ENCODE measurements at regions of chr11 and their contacts with region 1.

Region 1: DNA sequence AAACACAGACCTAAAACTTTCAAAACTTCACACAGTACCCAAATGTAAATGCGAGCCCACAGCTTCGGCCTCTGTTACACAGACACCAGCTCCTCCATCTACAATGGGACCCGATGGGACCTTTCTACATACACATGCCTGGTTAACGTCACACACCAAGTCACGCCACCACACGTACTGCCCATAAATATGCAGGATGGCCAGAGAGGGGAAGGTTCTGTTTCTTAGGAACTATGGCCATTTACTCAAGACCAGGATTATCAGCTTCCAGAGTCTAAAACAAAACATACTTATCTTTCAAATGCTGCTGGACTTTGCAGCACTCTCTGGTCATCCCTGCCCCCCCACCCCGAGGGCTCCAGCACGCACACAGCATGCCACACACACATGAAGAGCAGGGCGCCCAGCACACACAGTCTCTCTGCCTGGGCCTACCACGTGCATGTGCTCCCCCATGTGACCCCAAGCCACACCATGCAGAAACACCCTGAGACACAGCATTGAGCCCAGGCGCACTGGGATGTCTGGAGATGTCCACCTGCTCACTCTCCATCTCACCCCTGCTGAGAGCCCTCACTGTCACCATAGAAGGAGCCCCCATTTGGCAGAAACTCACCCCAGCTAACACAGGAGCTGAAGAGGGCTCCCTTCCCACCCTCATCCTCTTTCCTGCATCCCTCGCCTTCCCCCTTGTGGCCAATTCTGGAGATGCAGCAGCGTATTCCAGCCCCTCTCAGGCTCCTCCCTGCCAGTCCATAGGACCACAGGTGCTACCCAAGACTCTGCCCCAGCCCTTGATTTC is 61.8 kb downstream of the SLC22A12 start:
- DNase-seq: peak; percentile 73
- H3K4me3 ChIP-seq: no peak overlapping the region
- H3K27ac ChIP-seq: no peak overlapping the region
- H3K4me1 ChIP-seq: peaks cover 17% of the 10 kb centered on the region
- CTCF ChIP-seq: peak; percentile 88

Region 2: DNA sequence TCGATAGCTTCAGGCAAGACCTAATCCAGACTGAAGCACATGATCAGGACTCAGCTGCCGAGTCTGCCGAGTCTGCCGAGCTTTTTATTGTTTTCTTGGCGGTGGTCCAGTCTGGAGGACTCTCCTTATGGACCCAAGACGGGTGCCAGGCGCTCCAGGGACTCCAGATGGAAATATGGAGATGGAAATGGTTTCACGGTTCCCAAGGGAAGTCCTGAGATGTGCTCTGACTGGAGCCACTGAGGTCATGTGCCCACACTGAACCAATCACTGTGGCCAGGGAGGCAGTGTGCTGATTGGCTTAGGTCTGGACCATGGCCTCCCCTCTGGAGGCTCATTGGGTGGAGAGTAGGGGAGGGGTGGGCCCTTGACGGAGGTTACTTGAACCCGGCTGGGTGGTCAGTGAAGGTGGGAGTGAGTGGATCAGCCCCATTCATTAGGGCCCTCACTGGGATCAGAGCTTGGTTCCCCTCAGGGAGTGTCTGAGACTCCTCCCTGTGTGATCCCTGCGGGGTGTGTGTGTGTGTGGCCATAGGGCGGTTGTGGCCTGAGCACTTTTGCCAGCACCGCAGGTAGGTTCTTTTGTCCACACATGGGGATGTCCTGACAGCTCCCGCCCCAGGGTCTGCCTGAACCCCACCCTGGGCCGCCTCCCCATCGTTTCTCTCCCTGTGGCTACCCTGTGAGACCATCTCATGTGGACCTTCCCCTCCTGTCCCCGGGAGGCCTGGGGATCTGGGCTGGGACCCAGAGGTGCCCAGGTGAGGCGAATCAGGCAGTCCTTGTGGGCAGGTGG is 279.8 kb before region 1 on chr11:
- CTCF ChIA-PET with region 1: no interaction called
- POLR2A ChIA-PET with region 1: no interaction called
- intact Hi-C with region 1: loop called (anchors 10 kb)
- DNase-seq: no peak
- H3K4me3 ChIP-seq: no peak overlapping the region
- H3K27ac ChIP-seq: peak overlapping the region; percentile 8
- H3K4me1 ChIP-seq: peaks cover 10% of the 10 kb centered on the region
- CTCF ChIP-seq: no peak

Region 3: GRCh38 chr11:64448599-64449556 is 203.9 kb before region 1 on chr11:
- CTCF ChIA-PET with region 1: interaction called, 9 read pairs
- POLR2A ChIA-PET with region 1: no interaction called
- intact Hi-C with region 1: loop called (anchors 2 kb)
- DNase-seq: peak; percentile 79
- H3K4me3 ChIP-seq: peak overlapping the region; percentile 56
- H3K27ac ChIP-seq: peak overlapping the region; percentile 56
- H3K4me1 ChIP-seq: peaks cover 22% of the 10 kb centered on the region
- CTCF ChIP-seq: peak; percentile 89

Region 4: GRCh38 chr11:64489831-64490441 is 162.9 kb before region 1 on chr11:
- CTCF ChIA-PET with region 1: no interaction called
- POLR2A ChIA-PET with region 1: no interaction called
- intact Hi-C with region 1: loop called (anchors 1 kb)
- DNase-seq: peak; percentile 41
- H3K4me3 ChIP-seq: no peak overlapping the region
- H3K27ac ChIP-seq: no peak overlapping the region
- H3K4me1 ChIP-seq: no peaks in the 10 kb centered on the region
- CTCF ChIP-seq: peak; percentile 84

Region 5: GRCh38 chr11:64553551-64554201 is 99.1 kb before region 1 on chr11:
- CTCF ChIA-PET with region 1: interaction called, 3 read pairs
- POLR2A ChIA-PET with region 1: no interaction called
- intact Hi-C with region 1: loop called (anchors 1 kb)
- DNase-seq: peak; percentile 59
- H3K4me3 ChIP-seq: no peak overlapping the region
- H3K27ac ChIP-seq: no peak overlapping the region
- H3K4me1 ChIP-seq: peaks cover 19% of the 10 kb centered on the region
- CTCF ChIP-seq: peak; percentile 98

Region 6: GRCh38 chr11:64723117-64723906 is 70.5 kb after region 1 on chr11 and contains the start of gene NRXN2:
- CTCF ChIA-PET with region 1: no interaction called
- POLR2A ChIA-PET with region 1: no interaction called
- intact Hi-C with region 1: loop called (anchors 1 kb)
- DNase-seq: peak; percentile 92
- H3K4me3 ChIP-seq: peak within 1 kb of the TSS; percentile 74
- H3K27ac ChIP-seq: peak within 1 kb of the TSS; percentile 43
- H3K4me1 ChIP-seq: peaks cover 18% of the 10 kb centered on the region
- CTCF ChIP-seq: peak; percentile 98
- total RNA-seq, gene NRXN2: 2.2 and 2.4 TPM in 2 replicates